Activated CD4-positive, alpha-beta T cell treated with anti-CD3 and anti-CD28 coated beads, Interleukin-2, amount 10 ng/mL, durations not matched to agents 7 days and 5 days (primary cell): ENCODE measurements at regions of chr15 and their contacts with region 1.

Region 1: DNA sequence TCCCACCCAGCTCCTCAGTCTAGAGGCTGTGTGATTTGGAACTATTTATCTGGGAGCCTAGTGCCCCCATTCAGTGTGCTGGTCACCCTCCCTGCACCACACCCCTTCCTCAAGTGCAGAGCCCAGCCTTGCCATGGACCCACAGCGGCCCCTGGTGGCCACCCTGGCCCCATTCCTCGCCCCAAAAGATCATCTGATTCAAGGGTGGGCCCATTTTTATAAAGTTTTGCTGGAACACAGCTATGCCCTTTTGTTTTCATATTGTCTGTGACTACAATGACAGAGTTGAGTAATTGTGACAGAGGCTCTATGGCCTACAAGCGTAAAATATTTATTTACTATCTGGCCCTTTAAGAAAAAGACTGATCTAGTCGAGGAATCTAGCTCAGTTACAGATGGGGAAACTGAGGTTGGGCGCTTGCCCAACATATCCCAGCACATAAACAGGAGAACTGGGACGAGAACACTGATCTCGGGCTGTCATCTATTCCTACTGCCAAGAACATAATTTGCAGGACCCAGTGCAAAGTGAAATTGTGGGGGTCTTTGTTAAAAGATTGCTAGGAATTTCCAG is 1.8 kb downstream of the FES start:
- DNase-seq: peak; percentile 80
- H3K4me3 Mint-ChIP-seq: no peak overlapping the region
- H3K27ac Mint-ChIP-seq: peak overlapping the region; percentile 78
- H3K4me1 Mint-ChIP-seq: peaks cover 35% of the 10 kb centered on the region
- H3K27me3 Mint-ChIP-seq: no peaks in the 10 kb centered on the region

Region 2: GRCh38 chr15:90716976-90717821 is 168.9 kb before region 1 on chr15 and contains the start of gene BLM:
- CTCF ChIA-PET with region 1: interaction called, 11 read pairs
- POLR2A ChIA-PET with region 1: no interaction called
- DNase-seq: peak; percentile 97
- H3K4me3 Mint-ChIP-seq: peak within 1 kb of the TSS; percentile 77
- H3K27ac Mint-ChIP-seq: peak within 1 kb of the TSS; percentile 97
- H3K4me1 Mint-ChIP-seq: peaks cover 29% of the 10 kb centered on the region
- H3K27me3 Mint-ChIP-seq: no peaks in the 10 kb centered on the region
- total RNA-seq, gene BLM: 50.2 to 57.7 TPM

Region 3: DNA sequence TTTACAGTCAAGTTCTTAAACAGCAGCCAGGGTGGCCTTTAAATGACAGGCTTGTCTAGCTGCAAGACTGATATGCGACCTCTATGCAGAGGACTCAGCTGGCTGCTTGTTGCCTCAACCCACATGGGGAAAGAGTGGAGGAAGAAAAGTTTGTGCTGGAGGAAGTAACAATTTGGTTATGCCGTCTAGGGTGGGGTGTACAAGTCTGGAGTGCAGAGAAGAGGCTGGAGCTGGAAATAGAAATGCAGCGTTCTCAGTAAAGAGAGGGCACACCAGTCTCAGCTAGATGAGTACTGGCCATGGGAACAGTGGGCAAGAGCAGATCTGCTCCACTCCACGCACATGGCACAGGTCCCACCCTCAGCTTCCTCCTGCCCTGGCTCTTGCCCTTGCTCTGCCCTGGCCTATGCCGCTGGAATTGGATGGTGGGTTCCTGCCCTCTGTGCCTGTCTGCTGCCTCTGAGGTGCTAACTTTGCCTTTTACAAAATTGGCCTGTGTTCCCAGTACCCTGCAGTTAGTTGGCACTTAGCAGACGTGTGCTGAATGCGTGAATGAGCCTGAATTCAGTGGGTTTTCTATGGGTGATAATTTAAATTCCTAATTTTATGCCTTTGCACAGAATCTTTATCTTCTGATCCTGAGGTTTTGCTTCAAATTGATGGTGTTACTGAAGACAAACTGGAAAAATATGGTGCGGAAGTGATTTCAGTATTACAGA is 77.5 kb before region 1 on chr15:
- CTCF ChIA-PET with region 1: interaction called, 20 read pairs
- POLR2A ChIA-PET with region 1: no interaction called
- DNase-seq: no peak
- H3K4me3 Mint-ChIP-seq: no peak overlapping the region
- H3K27ac Mint-ChIP-seq: peak overlapping the region; percentile 79
- H3K4me1 Mint-ChIP-seq: peaks cover 61% of the 10 kb centered on the region
- H3K27me3 Mint-ChIP-seq: no peaks in the 10 kb centered on the region

Region 4: GRCh38 chr15:90818251-90819210 is 67.6 kb before region 1 on chr15:
- CTCF ChIA-PET with region 1: interaction called, 20 read pairs
- POLR2A ChIA-PET with region 1: no interaction called
- DNase-seq: peak; percentile 36
- H3K4me3 Mint-ChIP-seq: peak overlapping the region; percentile 27
- H3K27ac Mint-ChIP-seq: peak overlapping the region; percentile 84
- H3K4me1 Mint-ChIP-seq: peaks cover 71% of the 10 kb centered on the region
- H3K27me3 Mint-ChIP-seq: no peaks in the 10 kb centered on the region

Region 5: GRCh38 chr15:90872486-90873379 is 13.4 kb before region 1 on chr15:
- CTCF ChIA-PET with region 1: interaction called, 11 read pairs
- POLR2A ChIA-PET with region 1: no interaction called
- DNase-seq: peak; percentile 28
- H3K4me3 Mint-ChIP-seq: peak overlapping the region; percentile 89
- H3K27ac Mint-ChIP-seq: peak overlapping the region; percentile 91
- H3K4me1 Mint-ChIP-seq: peaks cover 74% of the 10 kb centered on the region
- H3K27me3 Mint-ChIP-seq: no peaks in the 10 kb centered on the region

Region 6: GRCh38 chr15:90902040-90902839 is 16.1 kb after region 1 on chr15:
- CTCF ChIA-PET with region 1: interaction called, 20 read pairs
- POLR2A ChIA-PET with region 1: no interaction called
- DNase-seq: peak; percentile 77
- H3K4me3 Mint-ChIP-seq: peak overlapping the region; percentile 85
- H3K27ac Mint-ChIP-seq: peak overlapping the region; percentile 94
- H3K4me1 Mint-ChIP-seq: peaks cover 24% of the 10 kb centered on the region
- H3K27me3 Mint-ChIP-seq: no peaks in the 10 kb centered on the region

Region 7: DNA sequence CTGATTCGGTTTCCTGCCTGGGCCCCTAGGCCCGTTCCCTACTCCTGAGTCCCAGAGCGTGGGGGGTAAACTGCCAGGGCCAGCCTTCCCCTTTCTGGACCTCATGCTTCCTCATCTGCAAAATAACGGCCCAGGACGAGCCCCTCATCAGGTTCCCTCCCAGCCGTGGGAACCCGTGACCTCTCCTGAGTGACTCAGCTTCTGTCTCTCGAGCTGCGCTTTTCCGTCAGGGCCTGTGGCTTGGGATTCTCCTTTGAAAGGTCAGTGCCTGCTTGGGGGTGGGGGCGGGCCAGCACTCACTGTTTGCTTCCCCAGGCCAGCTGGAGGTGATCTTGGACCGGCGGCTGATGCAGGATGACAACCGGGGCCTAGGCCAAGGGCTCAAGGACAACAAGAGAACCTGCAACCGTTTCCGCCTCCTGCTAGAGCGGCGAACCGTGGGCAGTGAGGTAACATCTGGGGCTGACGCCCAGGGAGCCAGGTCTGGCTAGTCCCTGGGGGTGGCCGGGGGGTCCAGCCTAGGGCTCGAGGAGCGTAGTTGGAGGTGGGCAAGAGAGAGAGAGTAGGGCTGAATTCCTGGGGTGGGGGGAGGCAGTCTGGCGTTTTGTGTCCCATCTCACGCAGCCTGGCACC is 29.8 kb after region 1 on chr15:
- CTCF ChIA-PET with region 1: no interaction called
- POLR2A ChIA-PET with region 1: no interaction called
- DNase-seq: no peak
- H3K4me3 Mint-ChIP-seq: no peak overlapping the region
- H3K27ac Mint-ChIP-seq: no peak overlapping the region
- H3K4me1 Mint-ChIP-seq: no peaks in the 10 kb centered on the region
- H3K27me3 Mint-ChIP-seq: no peaks in the 10 kb centered on the region